ENCODE measurements at regions of chr7 and their contacts with region 1.

Region 1: GRCh38 chr7:141184532-141185190 is 110.8 kb downstream of the TMEM178B start:
- DNase-seq: no peak
- ATAC-seq: no peak
- H3K4me3 ChIP-seq: no peak overlapping the region
- H3K4me3 Mint-ChIP-seq: no peak overlapping the region
- H3K27ac ChIP-seq: no peak overlapping the region
- H3K27ac Mint-ChIP-seq: no peak overlapping the region
- H3K4me1 ChIP-seq: no peaks in the 10 kb centered on the region
- H3K4me1 Mint-ChIP-seq: no peaks in the 10 kb centered on the region
- H3K27me3 ChIP-seq: no peaks in the 10 kb centered on the region
- H3K27me3 Mint-ChIP-seq: peaks cover 0 to 25% of the 10 kb centered on the region in 2 donors
- CTCF ChIP-seq: no peak

Region 2: GRCh38 chr7:141027043-141027442 is 157.6 kb before region 1 on chr7:
- intact Hi-C with region 1: loop called (anchors 5 kb)
- DNase-seq: no peak
- ATAC-seq: no peak
- H3K4me3 ChIP-seq: no peak overlapping the region
- H3K4me3 Mint-ChIP-seq: no peak overlapping the region
- H3K27ac ChIP-seq: no peak overlapping the region
- H3K27ac Mint-ChIP-seq: no peak overlapping the region
- H3K4me1 ChIP-seq: no peaks in the 10 kb centered on the region
- H3K4me1 Mint-ChIP-seq: no peaks in the 10 kb centered on the region
- H3K27me3 ChIP-seq: peaks cover 7% of the 10 kb centered on the region
- H3K27me3 Mint-ChIP-seq: peaks cover 33 to 53% of the 10 kb centered on the region in 2 donors
- CTCF ChIP-seq: no peak

Region 3: DNA sequence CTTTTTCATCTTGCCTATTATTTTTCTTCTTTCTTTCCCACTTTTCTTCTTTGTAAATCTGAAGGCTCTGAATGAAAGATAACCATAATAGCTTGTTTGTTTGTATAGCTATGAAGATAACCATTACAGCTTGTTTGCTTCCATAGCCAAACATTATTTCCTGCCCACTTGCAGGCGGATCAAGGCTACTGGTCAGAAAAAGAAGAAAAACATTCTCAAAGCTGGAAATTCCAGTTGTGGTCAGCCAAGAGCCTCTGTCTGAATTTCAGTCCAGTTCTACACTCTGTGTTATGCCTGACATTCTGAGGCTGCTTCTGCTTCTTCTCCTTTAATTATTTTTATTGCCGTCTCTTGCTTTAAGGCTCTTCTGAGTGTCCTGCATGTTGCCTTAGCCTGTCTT is 61.9 kb before region 1 on chr7:
- intact Hi-C with region 1: no loop called
- DNase-seq: no peak
- ATAC-seq: no peak
- H3K4me3 ChIP-seq: no peak overlapping the region
- H3K4me3 Mint-ChIP-seq: no peak overlapping the region
- H3K27ac ChIP-seq: no peak overlapping the region
- H3K27ac Mint-ChIP-seq: no peak overlapping the region
- H3K4me1 ChIP-seq: no peaks in the 10 kb centered on the region
- H3K4me1 Mint-ChIP-seq: no peaks in the 10 kb centered on the region
- H3K27me3 ChIP-seq: peaks cover 4% of the 10 kb centered on the region
- H3K27me3 Mint-ChIP-seq: peaks cover 33 to 51% of the 10 kb centered on the region in 2 donors
- CTCF ChIP-seq: no peak

Region 4: DNA sequence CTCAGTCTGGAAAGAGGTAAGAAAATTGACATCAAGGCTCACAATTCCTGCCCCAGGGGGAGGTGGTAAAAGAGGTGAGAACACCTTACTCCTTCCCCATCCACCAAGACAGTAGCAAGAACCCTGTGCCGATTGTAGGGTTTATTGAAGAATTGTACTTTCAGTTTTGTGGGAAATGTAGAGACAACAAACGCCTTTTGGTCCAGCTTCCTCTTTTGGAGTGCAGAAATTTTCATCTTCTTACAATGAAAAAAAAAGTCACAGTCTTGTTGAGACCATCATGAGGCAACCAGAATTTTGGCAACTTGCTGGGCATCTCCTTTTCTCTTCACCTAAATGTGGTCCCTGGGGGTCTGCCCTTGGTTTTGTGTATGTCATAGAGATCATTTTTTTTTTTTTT is 106.9 kb after region 1 on chr7:
- intact Hi-C with region 1: no loop called
- DNase-seq: no peak
- ATAC-seq: no peak
- H3K4me3 ChIP-seq: no peak overlapping the region
- H3K4me3 Mint-ChIP-seq: no peak overlapping the region
- H3K27ac ChIP-seq: no peak overlapping the region
- H3K27ac Mint-ChIP-seq: no peak overlapping the region
- H3K4me1 ChIP-seq: no peaks in the 10 kb centered on the region
- H3K4me1 Mint-ChIP-seq: peaks cover 0 to 6% of the 10 kb centered on the region in 2 donors
- H3K27me3 ChIP-seq: no peaks in the 10 kb centered on the region
- H3K27me3 Mint-ChIP-seq: peaks cover 30 to 33% of the 10 kb centered on the region in 2 donors
- CTCF ChIP-seq: no peak